Naive thymus-derived CD4-positive, alpha-beta T cell (primary cell): ENCODE measurements at regions of chr14 and their contacts with region 1.

Region 1: GRCh38 chr14:31207755-31208545 is at the start of gene HECTD1:
- DNase-seq: peak in 8 of 9 donors; percentile 89 to 94 (median 92)
- ATAC-seq: peak; percentile 83
- H3K4me3 ChIP-seq: peak within 1 kb of the TSS; percentile 70
- H3K4me3 Mint-ChIP-seq: peak within 1 kb of the TSS; percentile 93 to 98 (median 96)
- H3K27ac ChIP-seq: peak within 1 kb of the TSS; percentile 100
- H3K27ac Mint-ChIP-seq: peak within 1 kb of the TSS; percentile 99 to 100 (median 99)
- H3K4me1 ChIP-seq: peaks cover 30 to 33% of the 10 kb centered on the region in 2 donors
- H3K4me1 Mint-ChIP-seq: peaks cover 33 to 68% (median 62%) of the 10 kb centered on the region in 7 donors
- H3K27me3 ChIP-seq: no peaks in the 10 kb centered on the region
- H3K27me3 Mint-ChIP-seq: no peaks in the 10 kb centered on the region
- total RNA-seq, gene HECTD1: 115 to 163 (median 158) TPM

Region 2: DNA sequence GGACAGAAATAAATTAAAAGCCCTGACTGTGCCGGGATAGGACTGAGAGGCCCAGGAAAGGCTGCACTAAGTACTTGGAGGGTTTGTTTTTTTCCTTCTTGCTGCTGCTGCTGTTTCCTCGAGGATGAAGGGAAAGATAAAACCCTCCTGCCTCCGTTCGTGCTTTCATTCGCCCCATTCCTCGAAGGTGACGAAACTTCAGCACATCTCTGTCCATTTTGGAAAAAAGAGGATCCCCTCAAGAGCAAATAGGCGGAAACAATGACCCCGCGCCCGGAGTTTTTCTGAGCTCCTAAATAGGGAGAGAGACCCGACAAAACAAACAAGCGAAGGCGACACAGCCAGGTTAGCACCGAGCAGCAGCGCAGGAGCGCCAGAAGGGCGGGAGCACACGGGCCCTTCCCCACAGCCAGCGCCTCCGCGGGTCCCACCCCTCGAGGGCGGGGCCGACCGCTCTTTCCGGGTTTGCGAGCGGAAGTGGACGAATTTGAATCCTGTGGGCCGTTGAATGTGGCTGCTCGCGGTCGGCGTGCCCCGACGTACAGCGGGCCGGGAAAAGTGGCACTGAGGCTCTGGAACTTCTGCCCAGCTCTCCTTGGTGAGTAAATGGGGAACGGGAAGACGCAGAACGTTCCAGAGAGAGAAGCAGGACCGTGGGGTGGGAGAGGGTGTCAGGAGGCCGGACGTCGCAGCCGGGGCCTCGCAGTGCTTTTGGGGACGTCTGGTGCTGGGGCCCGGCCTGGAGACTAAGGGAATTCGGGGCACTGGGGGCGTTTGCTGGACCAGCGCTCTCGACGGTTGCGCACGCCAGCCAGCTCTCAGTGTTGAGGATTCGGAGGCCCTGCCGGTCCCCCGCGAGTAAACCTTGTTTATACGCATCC is 649.0 kb before region 1 on chr14 and contains the start of gene G2E3:
- CTCF ChIA-PET with region 1: no interaction called
- POLR2A ChIA-PET with region 1: no interaction called
- intact Hi-C with region 1: loop called (anchors 2 to 5 kb)
- DNase-seq: peak; percentile 75 to 91 (median 85)
- ATAC-seq: peak; percentile 100
- H3K4me3 ChIP-seq: peak within 1 kb of the TSS; percentile 76
- H3K4me3 Mint-ChIP-seq: peak within 1 kb of the TSS; percentile 97 to 100 (median 99)
- H3K27ac ChIP-seq: peak within 1 kb of the TSS; percentile 77
- H3K27ac Mint-ChIP-seq: peak within 1 kb of the TSS; percentile 93 to 100 (median 98)
- H3K4me1 ChIP-seq: peaks cover 5 to 12% of the 10 kb centered on the region in 2 donors
- H3K4me1 Mint-ChIP-seq: peaks cover 24 to 43% (median 28%) of the 10 kb centered on the region in 7 donors
- H3K27me3 ChIP-seq: no peaks in the 10 kb centered on the region
- H3K27me3 Mint-ChIP-seq: peaks cover 0 to 4% (median 0%) of the 10 kb centered on the region in 5 donors
- total RNA-seq, gene G2E3: 25.0 to 29.7 (median 28.6) TPM

Region 3: DNA sequence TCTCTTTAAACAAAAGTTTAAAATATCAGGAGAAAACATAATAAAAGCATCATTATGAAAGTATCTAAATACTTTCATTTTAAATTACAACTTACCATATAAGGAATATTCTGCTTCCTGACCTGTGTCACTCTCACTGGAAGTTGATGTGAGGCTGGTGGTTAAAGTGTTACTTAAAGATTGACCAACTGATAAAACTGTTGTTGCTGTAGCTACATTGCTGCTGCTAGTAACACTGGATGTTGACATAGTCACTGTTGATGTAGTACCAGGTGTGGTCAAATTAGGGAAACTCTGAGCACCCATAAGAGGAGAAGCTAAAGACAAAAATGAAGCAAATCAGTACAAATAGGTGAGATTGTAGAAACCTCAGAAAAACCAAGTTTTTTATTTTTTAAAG is 80.3 kb before region 1 on chr14:
- CTCF ChIA-PET with region 1: no interaction called
- POLR2A ChIA-PET with region 1: interaction called, 9 read pairs
- intact Hi-C with region 1: loop called (anchors 1 to 2 kb)
- DNase-seq: peak in 5 of 9 donors; percentile 2 to 42 (median 27)
- ATAC-seq: peak; percentile 91
- H3K4me3 ChIP-seq: no peak overlapping the region
- H3K4me3 Mint-ChIP-seq: peak overlapping the region in 3 of 10 donors; percentile 7 to 67 (median 18)
- H3K27ac ChIP-seq: no peak overlapping the region
- H3K27ac Mint-ChIP-seq: peak overlapping the region in 5 of 9 donors; percentile 11 to 75 (median 52)
- H3K4me1 ChIP-seq: peaks cover 9 to 30% of the 10 kb centered on the region in 2 donors
- H3K4me1 Mint-ChIP-seq: peaks cover 16 to 47% (median 39%) of the 10 kb centered on the region in 7 donors
- H3K27me3 ChIP-seq: no peaks in the 10 kb centered on the region
- H3K27me3 Mint-ChIP-seq: peaks cover 0 to 2% (median 0%) of the 10 kb centered on the region in 5 donors

Region 4: DNA sequence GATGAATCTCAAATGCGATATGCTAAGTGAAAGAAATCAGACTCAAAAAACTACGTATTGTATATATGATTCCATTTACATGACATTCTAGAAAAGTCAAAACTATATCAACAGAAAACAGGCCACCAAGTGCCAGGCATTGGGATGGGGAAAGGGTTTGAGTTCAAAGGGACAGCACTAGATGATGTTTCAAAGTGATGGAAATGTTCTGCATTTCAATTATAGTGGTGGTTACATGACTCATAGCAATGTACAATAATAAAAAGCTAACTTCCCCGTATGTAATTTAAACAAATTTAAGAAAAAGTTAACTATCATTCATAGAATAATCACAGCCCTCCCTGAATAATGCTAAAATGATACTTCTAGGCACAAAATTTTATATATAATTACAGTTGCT is 13.9 kb before region 1 on chr14:
- CTCF ChIA-PET with region 1: no interaction called
- POLR2A ChIA-PET with region 1: interaction called, 5 read pairs
- intact Hi-C with region 1: loop called in 1 of 2 experiments (anchors 2 kb)
- DNase-seq: no peak
- ATAC-seq: no peak
- H3K4me3 ChIP-seq: no peak overlapping the region
- H3K4me3 Mint-ChIP-seq: no peak overlapping the region
- H3K27ac ChIP-seq: no peak overlapping the region
- H3K27ac Mint-ChIP-seq: no peak overlapping the region
- H3K4me1 ChIP-seq: peaks cover 4 to 12% of the 10 kb centered on the region in 2 donors
- H3K4me1 Mint-ChIP-seq: peaks cover 26 to 70% (median 57%) of the 10 kb centered on the region in 7 donors
- H3K27me3 ChIP-seq: no peaks in the 10 kb centered on the region
- H3K27me3 Mint-ChIP-seq: no peaks in the 10 kb centered on the region

Region 5: GRCh38 chr14:31326111-31326510 is 118.2 kb after region 1 on chr14:
- CTCF ChIA-PET with region 1: interaction called, 6 read pairs
- POLR2A ChIA-PET with region 1: interaction called, 6 read pairs
- intact Hi-C with region 1: loop called in 1 of 2 experiments (anchors 2 kb)
- DNase-seq: peak in 7 of 9 donors; percentile 7 to 35 (median 16)
- ATAC-seq: no peak
- H3K4me3 ChIP-seq: no peak overlapping the region
- H3K4me3 Mint-ChIP-seq: no peak overlapping the region
- H3K27ac ChIP-seq: no peak overlapping the region
- H3K27ac Mint-ChIP-seq: no peak overlapping the region
- H3K4me1 ChIP-seq: no peaks in the 10 kb centered on the region
- H3K4me1 Mint-ChIP-seq: no peaks in the 10 kb centered on the region
- H3K27me3 ChIP-seq: no peaks in the 10 kb centered on the region
- H3K27me3 Mint-ChIP-seq: no peaks in the 10 kb centered on the region

Region 6: DNA sequence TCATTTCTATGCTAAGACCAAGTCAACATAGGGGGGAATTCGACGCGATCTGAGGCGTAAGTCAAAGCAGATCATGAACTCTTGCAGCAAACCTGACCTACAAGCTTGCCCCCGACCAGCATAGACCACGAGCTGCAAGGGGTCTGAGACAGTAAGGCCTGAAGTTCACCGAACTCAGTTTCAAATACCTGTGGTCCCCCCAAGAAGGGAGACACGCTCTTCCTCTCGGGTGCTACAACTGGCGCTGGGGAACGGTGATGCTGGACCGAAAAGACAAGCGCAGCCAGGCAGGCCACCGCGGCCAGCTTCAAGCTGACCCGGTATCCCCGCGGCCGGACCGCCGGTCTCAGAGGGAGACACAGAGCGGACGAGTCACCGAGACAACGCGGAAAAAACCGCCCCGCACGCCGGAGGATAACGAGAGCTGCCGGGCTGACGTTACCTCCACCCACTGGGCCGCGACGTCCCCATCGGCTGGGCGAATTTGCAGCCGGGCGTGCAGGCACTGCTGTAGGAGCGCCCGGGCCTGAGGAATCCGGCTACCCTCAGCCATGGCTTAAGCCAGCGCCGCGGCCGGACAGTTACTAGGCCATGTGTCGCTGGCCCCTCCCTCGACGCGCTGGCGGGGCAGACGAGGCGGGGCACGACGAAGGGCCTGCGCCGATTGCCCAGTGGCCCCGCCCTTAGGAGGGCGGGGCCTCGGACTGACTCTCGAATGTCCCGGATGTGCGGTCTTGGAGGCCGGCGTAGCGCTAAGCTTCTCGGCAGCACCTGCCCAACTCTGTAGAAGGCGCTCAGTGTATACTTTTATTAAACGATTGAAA is 249.1 kb after region 1 on chr14 and contains the start of gene DTD2:
- CTCF ChIA-PET with region 1: no interaction called
- POLR2A ChIA-PET with region 1: interaction called, 13 read pairs
- intact Hi-C with region 1: loop called (anchors 1 to 2 kb)
- DNase-seq: peak; percentile 80 to 89 (median 86)
- ATAC-seq: peak; percentile 99
- H3K4me3 ChIP-seq: peak within 1 kb of the TSS; percentile 82
- H3K4me3 Mint-ChIP-seq: peak within 1 kb of the TSS; percentile 92 to 98 (median 96)
- H3K27ac ChIP-seq: peak within 1 kb of the TSS; percentile 77
- H3K27ac Mint-ChIP-seq: peak within 1 kb of the TSS; percentile 89 to 98 (median 95)
- H3K4me1 ChIP-seq: peaks cover 6% of the 10 kb centered on the region in 2 donors
- H3K4me1 Mint-ChIP-seq: peaks cover 14 to 48% (median 40%) of the 10 kb centered on the region in 7 donors
- H3K27me3 ChIP-seq: no peaks in the 10 kb centered on the region
- H3K27me3 Mint-ChIP-seq: peaks cover 0 to 5% (median 0%) of the 10 kb centered on the region in 5 donors
- total RNA-seq, gene DTD2: 13.4 to 20.2 (median 18.6) TPM

Region 7: DNA sequence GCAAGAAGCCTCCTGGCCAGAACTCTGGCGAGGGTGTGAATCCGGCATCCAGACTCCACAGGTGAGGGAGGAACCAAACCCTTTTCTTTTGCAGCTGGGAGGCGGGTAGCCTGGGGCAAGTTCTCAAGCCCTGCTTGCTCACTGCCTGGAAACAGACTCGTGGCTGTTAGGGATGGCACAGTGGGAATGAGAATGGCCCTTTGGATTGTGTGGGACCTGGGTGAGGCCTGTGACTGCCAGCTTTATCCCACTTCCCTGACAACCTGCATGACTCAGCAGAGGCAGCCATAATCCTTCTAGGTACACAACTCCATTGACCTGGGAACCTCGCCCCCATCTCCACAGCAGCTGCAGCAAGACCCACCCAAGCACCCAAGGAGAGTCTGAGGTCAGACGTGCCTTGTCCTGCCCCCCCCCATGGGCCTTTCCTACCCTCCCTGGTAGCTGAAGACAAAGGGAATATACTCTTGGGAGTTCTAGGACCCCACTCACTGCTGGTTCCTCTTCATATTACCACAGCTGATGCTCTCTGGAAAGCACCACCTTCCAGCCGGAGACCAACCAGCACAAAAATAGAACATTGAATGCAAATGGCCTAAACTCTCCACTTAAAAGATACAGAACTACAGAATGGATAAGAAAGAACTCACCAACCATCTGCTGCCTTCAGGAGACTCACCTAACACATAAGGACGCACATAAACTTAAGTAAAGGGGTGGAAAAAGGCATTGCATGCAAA is 285.0 kb after region 1 on chr14:
- CTCF ChIA-PET with region 1: no interaction called
- POLR2A ChIA-PET with region 1: no interaction called
- intact Hi-C with region 1: no loop called
- DNase-seq: no peak
- ATAC-seq: no peak
- H3K4me3 ChIP-seq: no peak overlapping the region
- H3K4me3 Mint-ChIP-seq: no peak overlapping the region
- H3K27ac ChIP-seq: no peak overlapping the region
- H3K27ac Mint-ChIP-seq: no peak overlapping the region
- H3K4me1 ChIP-seq: no peaks in the 10 kb centered on the region
- H3K4me1 Mint-ChIP-seq: no peaks in the 10 kb centered on the region
- H3K27me3 ChIP-seq: no peaks in the 10 kb centered on the region
- H3K27me3 Mint-ChIP-seq: peaks cover 10 to 22% (median 14%) of the 10 kb centered on the region in 5 donors

Region 8: GRCh38 chr14:32202998-32203882 is 995.3 kb after region 1 on chr14 and contains the start of gene RNU6-8:
- CTCF ChIA-PET with region 1: no interaction called
- POLR2A ChIA-PET with region 1: interaction called, 5 read pairs
- intact Hi-C with region 1: loop called (anchors 1 kb)
- DNase-seq: peak; percentile 79 to 96 (median 93)
- ATAC-seq: peak; percentile 91
- H3K4me3 ChIP-seq: peak within 1 kb of the TSS; percentile 85
- H3K4me3 Mint-ChIP-seq: peak within 1 kb of the TSS; percentile 91 to 98 (median 94)
- H3K27ac ChIP-seq: peak within 1 kb of the TSS; percentile 92
- H3K27ac Mint-ChIP-seq: peak within 1 kb of the TSS; percentile 96 to 100 (median 100)
- H3K4me1 ChIP-seq: peaks cover 0 to 9% of the 10 kb centered on the region in 2 donors
- H3K4me1 Mint-ChIP-seq: peaks cover 2 to 46% (median 21%) of the 10 kb centered on the region in 7 donors
- H3K27me3 ChIP-seq: no peaks in the 10 kb centered on the region
- H3K27me3 Mint-ChIP-seq: peaks cover 0 to 30% (median 0%) of the 10 kb centered on the region in 5 donors
- total RNA-seq, gene RNU6-8: not detected